ENCODE measurements at regions of chr17 and their contacts with region 1.

Region 1: DNA sequence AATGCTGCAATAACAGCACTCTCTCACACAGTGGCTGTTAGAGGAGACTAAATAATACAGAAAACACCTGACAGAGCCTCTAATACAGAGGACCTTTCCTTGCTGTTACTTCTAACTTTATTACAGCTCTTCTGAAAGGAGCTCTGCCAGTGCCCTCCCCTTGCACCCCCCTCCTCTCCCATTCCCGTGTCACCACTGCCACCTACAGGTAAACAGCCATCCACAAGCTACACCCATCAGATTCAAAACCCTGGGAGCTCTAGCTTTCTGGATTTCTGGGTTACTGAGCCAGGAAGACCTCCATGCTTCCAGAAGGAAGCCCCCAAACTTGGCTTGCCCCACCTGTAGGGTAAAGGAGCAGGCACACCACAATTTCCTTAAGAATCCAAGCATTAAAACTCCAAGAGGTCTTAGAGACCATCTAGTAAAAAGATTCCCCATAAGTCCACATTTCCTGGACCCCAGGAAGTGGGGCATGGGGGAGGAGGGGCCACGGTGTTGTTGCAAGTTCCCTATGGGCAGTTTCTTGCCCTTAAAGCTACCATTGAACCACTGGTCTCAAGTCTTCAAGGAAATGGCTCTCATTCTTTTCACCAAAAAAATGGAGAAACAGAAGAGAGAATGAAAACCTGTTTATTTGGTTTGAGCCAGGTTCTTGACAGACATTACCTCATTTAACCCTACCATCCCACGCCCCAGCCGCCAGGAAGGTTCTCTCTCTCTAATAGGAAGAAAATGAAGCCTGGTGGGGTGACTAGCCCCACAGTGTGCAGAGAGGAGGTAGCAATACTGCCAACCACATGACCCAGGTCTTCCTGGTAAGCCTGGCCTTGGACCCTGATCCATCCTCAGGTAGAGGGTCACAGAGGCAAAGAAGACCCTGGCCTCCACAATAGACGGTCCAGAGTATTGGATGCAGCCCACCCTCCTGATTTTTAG is 52.8 kb downstream of the TOM1L2 start:
- DNase-seq: peak; percentile 54
- ATAC-seq: peak; percentile 48
- H3K4me3 ChIP-seq: no peak overlapping the region
- H3K27ac ChIP-seq: peak overlapping the region; percentile 98
- H3K4me1 ChIP-seq: peaks cover 66 to 78% of the 10 kb centered on the region in 2 experiments
- H3K27me3 ChIP-seq: no peaks in the 10 kb centered on the region
- CTCF ChIP-seq: peak; percentile 90 to 93 (median 91)
- POLR2A ChIP-seq: no peak
- RAD21 ChIP-seq: peak; percentile 96

Region 2: DNA sequence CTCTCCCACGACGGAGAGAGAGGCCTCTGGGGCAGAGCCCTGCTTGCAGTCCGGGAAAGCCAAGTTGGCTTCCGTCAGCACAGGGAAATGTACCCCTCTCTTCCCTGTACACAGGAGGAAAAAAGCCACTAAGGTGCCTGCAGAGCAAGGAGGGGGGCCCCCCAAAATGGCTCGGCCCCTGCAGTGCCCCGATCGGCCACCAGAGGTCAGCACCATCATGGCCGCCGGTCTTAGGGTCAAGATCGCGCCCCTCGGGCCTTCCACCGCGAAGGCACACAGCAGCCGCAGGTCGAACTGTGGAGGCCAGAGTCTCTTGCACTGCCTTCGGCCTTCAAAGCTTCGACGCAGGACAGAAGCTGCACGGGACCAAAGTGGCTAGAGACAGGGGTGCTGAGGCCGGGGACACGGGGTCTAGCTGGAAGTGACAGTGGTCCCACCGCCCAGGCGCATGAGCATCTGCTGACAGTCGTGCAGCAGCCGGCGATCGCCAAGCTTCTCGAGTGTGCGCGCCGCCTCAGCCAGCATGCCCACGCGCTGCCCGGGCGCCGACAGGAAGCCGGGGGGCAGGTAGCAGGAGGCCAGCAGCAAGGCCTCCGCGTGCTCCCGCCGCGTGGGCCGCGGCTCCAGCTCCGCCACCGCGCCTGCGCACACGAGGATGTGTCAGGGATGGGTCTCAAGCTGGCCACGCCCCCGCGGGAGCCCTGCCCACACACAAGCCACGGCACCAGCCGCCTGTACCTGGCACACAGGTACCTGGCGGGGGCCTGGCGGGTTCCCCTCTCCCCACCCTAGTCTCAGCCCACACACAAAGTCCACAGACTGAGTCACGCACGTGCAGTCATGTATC is 107.0 kb before region 1 on chr17:
- CTCF ChIA-PET with region 1: interaction called, 4 read pairs
- POLR2A ChIA-PET with region 1: interaction called, 3 read pairs
- RAD21 ChIA-PET with region 1: interaction called in 1 of 2 experiments, 3 read pairs
- intact Hi-C with region 1: loop called (anchors 1 kb)
- DNase-seq: no peak
- ATAC-seq: peak; percentile 46
- H3K4me3 ChIP-seq: no peak overlapping the region
- H3K27ac ChIP-seq: peak overlapping the region; percentile 54
- H3K4me1 ChIP-seq: peaks cover 8 to 28% of the 10 kb centered on the region in 2 experiments; a peak in 3 of 4 replicates
- H3K27me3 ChIP-seq: no peaks in the 10 kb centered on the region
- CTCF ChIP-seq: peak; percentile 66 to 98 (median 96); a peak in 5 of 6 replicates
- POLR2A ChIP-seq: no peak
- RAD21 ChIP-seq: peak; percentile 79

Region 3: DNA sequence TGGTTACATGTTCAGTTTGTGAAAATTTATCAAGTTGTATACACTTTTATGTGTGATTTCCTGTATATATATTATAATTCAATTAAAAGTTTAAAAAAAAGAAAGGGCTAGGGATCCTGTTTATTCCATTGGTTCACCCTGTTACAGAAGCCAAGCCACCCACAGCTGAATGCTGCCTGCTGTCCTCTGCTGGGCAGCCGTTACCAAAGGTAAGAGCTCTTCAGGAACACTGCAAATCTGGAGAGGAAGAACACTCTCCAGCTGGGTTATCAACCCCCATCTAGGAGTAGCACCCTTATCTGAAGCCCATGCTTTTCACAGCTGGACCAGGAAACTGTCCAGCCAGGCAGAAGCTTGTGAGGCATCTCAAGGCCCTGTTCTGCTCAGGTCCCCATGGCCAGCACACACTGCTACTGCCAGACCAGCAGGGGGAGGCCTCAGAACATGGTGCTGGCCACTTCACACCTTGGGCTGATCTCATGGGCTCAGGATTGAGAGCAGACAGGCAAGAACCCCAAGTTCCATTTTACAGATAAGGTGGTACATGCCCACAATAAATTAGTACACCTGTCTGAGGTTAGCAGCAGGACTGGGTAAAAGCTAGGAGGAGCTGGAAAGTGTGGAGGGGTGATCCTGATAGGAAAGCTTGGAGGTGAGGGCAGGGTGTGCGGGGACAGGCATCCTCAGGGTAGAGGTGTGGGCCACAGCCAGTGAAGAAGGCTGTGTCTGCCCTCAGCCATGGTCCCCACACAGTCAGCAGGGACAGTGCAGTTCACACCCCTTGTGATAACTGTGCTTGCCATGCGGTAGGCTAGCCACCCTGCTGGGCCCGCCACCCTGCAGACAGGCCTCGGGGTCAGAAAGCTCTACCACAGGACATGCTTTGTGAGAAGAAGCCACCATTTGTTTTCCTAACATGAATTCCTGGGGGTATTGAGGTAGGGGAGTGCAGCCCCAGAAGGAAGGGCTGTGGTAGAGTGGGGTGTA is 28.4 kb before region 1 on chr17:
- CTCF ChIA-PET with region 1: interaction called, 59 read pairs
- POLR2A ChIA-PET with region 1: interaction called, 4 read pairs
- RAD21 ChIA-PET with region 1: interaction called, 15 to 22 read pairs
- intact Hi-C with region 1: loop called (anchors 2 kb)
- DNase-seq: peak; percentile 53
- ATAC-seq: peak; percentile 98
- H3K4me3 ChIP-seq: no peak overlapping the region
- H3K27ac ChIP-seq: no peak overlapping the region
- H3K4me1 ChIP-seq: 0 out of 4 replicates have a peak, but pooled peaks cover 0 to 4% of the 10 kb centered on the region in 2 experiments
- H3K27me3 ChIP-seq: no peaks in the 10 kb centered on the region
- CTCF ChIP-seq: peak; percentile 88 to 95 (median 89)
- POLR2A ChIP-seq: no peak
- RAD21 ChIP-seq: peak; percentile 98

Region 4: GRCh38 chr17:17959520-17960361 is 40.3 kb after region 1 on chr17:
- CTCF ChIA-PET with region 1: interaction called, 6 read pairs
- POLR2A ChIA-PET with region 1: interaction called, 4 read pairs
- RAD21 ChIA-PET with region 1: interaction called in 1 of 2 experiments, 3 read pairs
- intact Hi-C with region 1: loop called (anchors 2 kb)
- DNase-seq: no peak
- ATAC-seq: no peak
- H3K4me3 ChIP-seq: no peak overlapping the region
- H3K27ac ChIP-seq: peak overlapping the region; percentile 88; the same call in 1 of the 2 replicates
- H3K4me1 ChIP-seq: peaks cover 36 to 48% of the 10 kb centered on the region in 2 experiments
- H3K27me3 ChIP-seq: no peaks in the 10 kb centered on the region
- CTCF ChIP-seq: no peak
- POLR2A ChIP-seq: no peak
- RAD21 ChIP-seq: no peak

Region 5: DNA sequence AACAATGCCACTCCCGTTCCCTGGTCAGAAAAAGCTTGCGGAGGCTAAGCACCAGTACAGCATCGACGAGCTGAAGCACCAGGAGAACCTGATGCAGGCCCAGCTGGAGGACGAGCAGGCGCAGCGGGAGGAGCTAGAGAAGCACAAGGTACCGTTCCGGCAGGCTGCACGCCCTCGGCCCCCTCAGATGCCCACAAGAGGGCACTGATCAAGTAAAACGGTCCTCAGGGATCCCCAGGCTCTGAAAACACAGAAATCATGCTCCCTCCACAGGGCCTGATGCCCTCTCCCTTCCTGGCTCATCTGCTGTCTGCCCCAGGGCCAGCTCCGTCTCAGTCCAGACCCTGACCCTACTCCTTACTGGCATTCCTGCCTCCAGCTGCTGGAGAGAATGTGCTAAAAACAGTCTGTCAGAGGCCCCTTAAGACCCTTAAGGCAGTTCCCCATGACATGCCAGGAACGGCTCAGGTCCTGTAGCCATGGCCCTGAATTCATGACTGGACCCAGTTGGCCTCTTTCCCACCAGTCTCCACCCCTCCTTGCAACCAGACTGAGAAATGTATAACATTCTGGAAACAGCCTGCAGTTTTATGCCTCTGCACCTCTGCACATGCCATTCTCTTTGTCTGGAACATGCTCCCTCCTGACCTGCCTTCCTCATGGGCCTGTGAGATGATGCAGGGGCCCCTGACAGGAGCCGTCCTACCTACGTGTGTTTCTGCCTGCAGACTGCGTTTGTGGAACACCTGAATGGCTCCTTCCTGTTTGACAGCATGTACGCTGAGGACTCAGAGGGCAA is 75.0 kb after region 1 on chr17:
- CTCF ChIA-PET with region 1: interaction called, 3 read pairs
- POLR2A ChIA-PET with region 1: no interaction called
- RAD21 ChIA-PET with region 1: no interaction called
- intact Hi-C with region 1: loop called (anchors 2 kb)
- DNase-seq: peak; percentile 15
- ATAC-seq: peak; percentile 83
- H3K4me3 ChIP-seq: no peak overlapping the region
- H3K27ac ChIP-seq: no peak overlapping the region; the same call in 1 of the 2 replicates
- H3K4me1 ChIP-seq: peaks cover 18 to 35% of the 10 kb centered on the region in 2 experiments
- H3K27me3 ChIP-seq: no peaks in the 10 kb centered on the region
- CTCF ChIP-seq: peak; percentile 20 to 62 (median 55); a peak in 5 of 6 replicates
- POLR2A ChIP-seq: no peak
- RAD21 ChIP-seq: peak; percentile 41; the same call in 1 of the 2 replicates

Region 6: GRCh38 chr17:18017958-18018357 is 98.5 kb after region 1 on chr17:
- CTCF ChIA-PET with region 1: no interaction called
- POLR2A ChIA-PET with region 1: no interaction called
- RAD21 ChIA-PET with region 1: no interaction called
- intact Hi-C with region 1: no loop called
- DNase-seq: no peak
- ATAC-seq: no peak
- H3K4me3 ChIP-seq: no peak overlapping the region
- H3K27ac ChIP-seq: no peak overlapping the region
- H3K4me1 ChIP-seq: no peaks in the 10 kb centered on the region
- H3K27me3 ChIP-seq: no peaks in the 10 kb centered on the region
- CTCF ChIP-seq: no peak
- POLR2A ChIP-seq: no peak
- RAD21 ChIP-seq: no peak

Region 7: GRCh38 chr17:18248300-18248731 is 328.9 kb after region 1 on chr17:
- CTCF ChIA-PET with region 1: no interaction called
- POLR2A ChIA-PET with region 1: no interaction called
- RAD21 ChIA-PET with region 1: no interaction called
- intact Hi-C with region 1: no loop called
- DNase-seq: no peak
- ATAC-seq: peak; percentile 69
- H3K4me3 ChIP-seq: no peak overlapping the region
- H3K27ac ChIP-seq: peak overlapping the region; percentile 19; the same call in 1 of the 2 replicates
- H3K4me1 ChIP-seq: peaks cover 0 to 12% of the 10 kb centered on the region in 2 experiments; a peak in 2 of 4 replicates
- H3K27me3 ChIP-seq: no peaks in the 10 kb centered on the region
- CTCF ChIP-seq: peak; percentile 63 to 76 (median 72); a peak in 5 of 6 replicates
- POLR2A ChIP-seq: no peak
- RAD21 ChIP-seq: peak; percentile 88

Measured in HCT116 (cell line).